ENCODE measurements at regions of chr2 and their contacts with region 1.

Region 1: DNA sequence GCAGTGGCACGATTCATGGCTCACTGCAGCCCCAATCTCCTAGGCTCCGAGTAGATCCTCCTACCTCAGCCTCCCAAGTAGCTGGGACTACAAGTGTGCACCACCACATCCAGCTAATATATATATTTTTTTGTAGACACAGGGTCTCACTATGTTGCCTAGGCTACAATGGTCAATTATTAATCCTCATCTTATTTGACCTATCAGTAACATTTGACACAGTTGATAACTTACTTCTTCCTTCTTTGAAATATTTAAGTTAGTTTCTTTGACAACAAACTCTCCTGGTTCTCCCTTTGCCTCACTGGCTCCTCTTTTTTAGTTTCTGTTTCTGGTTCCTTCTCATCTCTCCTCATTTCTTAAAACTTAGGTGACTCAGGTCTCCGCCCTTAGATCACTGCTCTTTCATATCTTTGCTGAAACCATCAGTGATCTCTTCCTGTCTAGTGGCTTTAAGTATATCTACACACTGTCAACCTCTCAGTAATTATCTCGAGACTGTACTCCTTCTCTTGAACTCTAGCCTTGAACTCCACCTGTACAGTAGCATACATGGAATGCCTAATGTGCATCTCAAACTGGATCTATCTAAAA is 11.5 kb downstream of the PGAP1 start:
- DNase-seq: peak; percentile 33
- H3K4me3 Mint-ChIP-seq: peak overlapping the region; percentile 63
- H3K27ac Mint-ChIP-seq: peak overlapping the region; percentile 94
- H3K4me1 Mint-ChIP-seq: peaks cover 37% of the 10 kb centered on the region
- H3K27me3 Mint-ChIP-seq: no peaks in the 10 kb centered on the region

Region 2: GRCh38 chr2:196798980-196799379 is 116.0 kb before region 1 on chr2:
- intact Hi-C with region 1: loop called (anchors 5 kb)
- DNase-seq: no peak
- H3K4me3 Mint-ChIP-seq: peak overlapping the region; percentile 98
- H3K27ac Mint-ChIP-seq: peak overlapping the region; percentile 95
- H3K4me1 Mint-ChIP-seq: peaks cover 28% of the 10 kb centered on the region
- H3K27me3 Mint-ChIP-seq: no peaks in the 10 kb centered on the region

Region 3: DNA sequence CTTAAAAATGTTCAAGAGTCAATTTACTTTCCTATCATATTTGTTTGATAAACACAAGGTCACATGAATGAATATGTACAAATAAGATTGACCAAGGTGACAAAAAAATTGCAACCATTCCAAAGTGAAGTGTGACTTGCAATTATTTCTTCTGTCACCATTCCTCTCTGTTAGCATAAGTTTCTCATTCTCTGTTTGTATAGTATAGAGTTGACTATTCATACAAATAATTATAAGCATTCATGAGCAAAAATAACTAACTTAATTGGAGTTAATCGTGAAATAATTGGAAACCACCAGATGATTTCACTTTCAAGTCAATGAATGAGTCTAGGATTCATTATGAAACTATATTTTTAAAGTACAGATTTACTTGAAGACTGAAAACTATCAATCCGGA is 30.6 kb before region 1 on chr2:
- intact Hi-C with region 1: loop called (anchors 5 kb)
- DNase-seq: no peak
- H3K4me3 Mint-ChIP-seq: no peak overlapping the region
- H3K27ac Mint-ChIP-seq: no peak overlapping the region
- H3K4me1 Mint-ChIP-seq: no peaks in the 10 kb centered on the region
- H3K27me3 Mint-ChIP-seq: no peaks in the 10 kb centered on the region

Region 4: DNA sequence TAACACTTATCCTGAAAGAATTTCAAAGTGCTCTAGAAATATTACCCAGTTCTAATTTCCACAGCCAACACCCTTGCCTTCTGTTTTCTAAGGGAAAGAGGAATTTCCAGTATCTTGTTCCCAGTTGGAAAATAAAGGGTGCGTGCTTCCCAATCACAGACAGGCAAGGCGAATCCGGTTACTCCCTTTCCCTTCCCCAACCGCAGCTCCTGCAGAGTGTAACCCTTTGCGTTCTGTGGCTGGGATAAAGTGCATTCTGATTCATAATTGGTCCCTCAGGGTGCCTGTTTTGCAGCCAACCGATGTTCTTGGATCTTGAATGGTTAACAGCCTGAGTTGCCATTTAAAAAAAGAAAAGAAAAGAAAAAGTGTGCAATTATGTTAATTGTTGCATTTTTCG is 52.2 kb after region 1 on chr2:
- intact Hi-C with region 1: no loop called
- DNase-seq: no peak
- H3K4me3 Mint-ChIP-seq: no peak overlapping the region
- H3K27ac Mint-ChIP-seq: no peak overlapping the region
- H3K4me1 Mint-ChIP-seq: peaks cover 36% of the 10 kb centered on the region
- H3K27me3 Mint-ChIP-seq: no peaks in the 10 kb centered on the region

Measured in activated T-helper 2 cell treated with anti-CD3 and anti-CD28 coated beads, Interferon-gamma antibody, Interleukin-2, Interleukin-4, amounts not matched to agents 10 μg/mL and 5 μg/mL and 100 μg/mL, durations not matched to agents 14 hours and 24 hours and 36 hours (primary cell).